Calu3 (cell line): ENCODE measurements at regions of chr10 and their contacts with region 1.

Region 1: GRCh38 chr10:91251430-91252056 is 31.1 kb downstream of the PCGF5 start:
- DNase-seq: peak; percentile 28
- H3K4me3 Mint-ChIP-seq: no peak overlapping the region
- H3K27ac Mint-ChIP-seq: no peak overlapping the region
- H3K4me1 Mint-ChIP-seq: no peaks in the 10 kb centered on the region
- H3K27me3 Mint-ChIP-seq: no peaks in the 10 kb centered on the region
- CTCF ChIP-seq: peak; percentile 68

Region 2: GRCh38 chr10:90885176-90885575 is 366.4 kb before region 1 on chr10:
- CTCF ChIA-PET with region 1: interaction called, 4 read pairs
- intact Hi-C with region 1: loop called (anchors 10 kb)
- DNase-seq: no peak
- H3K4me3 Mint-ChIP-seq: no peak overlapping the region
- H3K27ac Mint-ChIP-seq: no peak overlapping the region
- H3K4me1 Mint-ChIP-seq: no peaks in the 10 kb centered on the region
- H3K27me3 Mint-ChIP-seq: no peaks in the 10 kb centered on the region
- CTCF ChIP-seq: no peak

Region 3: GRCh38 chr10:90912174-90912573 is 339.4 kb before region 1 on chr10:
- CTCF ChIA-PET with region 1: interaction called, 10 read pairs
- intact Hi-C with region 1: loop called (anchors 2 kb)
- DNase-seq: no peak
- H3K4me3 Mint-ChIP-seq: no peak overlapping the region
- H3K27ac Mint-ChIP-seq: no peak overlapping the region
- H3K4me1 Mint-ChIP-seq: no peaks in the 10 kb centered on the region
- H3K27me3 Mint-ChIP-seq: no peaks in the 10 kb centered on the region
- CTCF ChIP-seq: no peak

Region 4: GRCh38 chr10:90930971-90931888 is 320.3 kb before region 1 on chr10:
- CTCF ChIA-PET with region 1: no interaction called
- intact Hi-C with region 1: no loop called
- DNase-seq: peak; percentile 39
- H3K4me3 Mint-ChIP-seq: no peak overlapping the region
- H3K27ac Mint-ChIP-seq: peak overlapping the region; percentile 86
- H3K4me1 Mint-ChIP-seq: peaks cover 54% of the 10 kb centered on the region
- H3K27me3 Mint-ChIP-seq: no peaks in the 10 kb centered on the region
- CTCF ChIP-seq: no peak

Region 5: GRCh38 chr10:91006001-91006751 is 245.4 kb before region 1 on chr10:
- CTCF ChIA-PET with region 1: no interaction called
- intact Hi-C with region 1: loop called (anchors 2 kb)
- DNase-seq: peak; percentile 66
- H3K4me3 Mint-ChIP-seq: no peak overlapping the region
- H3K27ac Mint-ChIP-seq: no peak overlapping the region
- H3K4me1 Mint-ChIP-seq: peaks cover 9% of the 10 kb centered on the region
- H3K27me3 Mint-ChIP-seq: no peaks in the 10 kb centered on the region
- CTCF ChIP-seq: peak; percentile 68

Region 6: GRCh38 chr10:91043173-91043910 is 208.2 kb before region 1 on chr10:
- CTCF ChIA-PET with region 1: interaction called, 6 read pairs
- intact Hi-C with region 1: loop called (anchors 1 kb)
- DNase-seq: peak; percentile 1
- H3K4me3 Mint-ChIP-seq: no peak overlapping the region
- H3K27ac Mint-ChIP-seq: no peak overlapping the region
- H3K4me1 Mint-ChIP-seq: no peaks in the 10 kb centered on the region
- H3K27me3 Mint-ChIP-seq: peaks cover 45% of the 10 kb centered on the region
- CTCF ChIP-seq: peak; percentile 29

Region 7: DNA sequence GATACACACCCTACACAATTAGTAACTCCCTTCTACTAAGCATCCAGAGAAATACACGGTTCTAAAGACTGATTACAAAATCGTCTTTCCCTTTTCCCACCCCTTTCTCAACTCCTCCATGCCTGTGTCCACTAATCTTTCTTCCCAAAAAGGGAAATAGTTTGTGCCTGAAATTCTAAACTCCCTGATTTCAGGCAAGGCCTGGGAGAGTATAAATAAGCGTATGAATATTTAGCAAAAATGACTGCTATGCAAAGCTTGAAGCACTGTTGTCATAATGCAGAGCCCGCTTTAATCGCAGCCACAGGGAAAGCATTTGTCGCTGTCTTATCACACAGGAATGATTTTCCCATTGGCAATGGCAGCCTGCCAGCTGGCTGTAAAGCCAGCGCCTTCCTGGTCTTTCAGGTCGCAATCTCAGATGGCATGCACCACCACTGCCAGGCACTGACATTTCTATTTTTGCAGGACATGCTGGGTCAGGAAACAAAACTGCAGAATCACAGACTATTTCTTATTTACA is 173.9 kb before region 1 on chr10:
- CTCF ChIA-PET with region 1: no interaction called
- intact Hi-C with region 1: no loop called
- DNase-seq: peak; percentile 58
- H3K4me3 Mint-ChIP-seq: peak overlapping the region; percentile 25
- H3K27ac Mint-ChIP-seq: no peak overlapping the region
- H3K4me1 Mint-ChIP-seq: peaks cover 11% of the 10 kb centered on the region
- H3K27me3 Mint-ChIP-seq: peaks cover 83% of the 10 kb centered on the region
- CTCF ChIP-seq: no peak

Region 8: GRCh38 chr10:91088300-91089140 is 163.0 kb before region 1 on chr10:
- CTCF ChIA-PET with region 1: interaction called, 3 read pairs
- intact Hi-C with region 1: loop called (anchors 2 kb)
- DNase-seq: no peak
- H3K4me3 Mint-ChIP-seq: no peak overlapping the region
- H3K27ac Mint-ChIP-seq: no peak overlapping the region
- H3K4me1 Mint-ChIP-seq: no peaks in the 10 kb centered on the region
- H3K27me3 Mint-ChIP-seq: peaks cover under 1% of the 10 kb centered on the region
- CTCF ChIP-seq: no peak